H1 (cell line): ENCODE measurements at regions of chr1 and their contacts with region 1.

Region 1: GRCh38 chr1:157580179-157580827 is 17.6 kb downstream of the FCRL4 start:
- DNase-seq: peak in 1 of 2 experiments; percentile 53
- H3K4me3 ChIP-seq: no peak overlapping the region
- H3K27ac ChIP-seq: no peak overlapping the region
- H3K4me1 ChIP-seq: no peaks in the 10 kb centered on the region
- H3K27me3 ChIP-seq: no peaks in the 10 kb centered on the region
- CTCF ChIP-seq: peak in 2 of 3 experiments; percentile 75 to 82; a peak in 3 of 4 replicates
- EP300 ChIP-seq: no peak
- POLR2A ChIP-seq: no peak
- RAD21 ChIP-seq: peak; percentile 71 to 78

Region 2: GRCh38 chr1:157562515-157562914 is 17.8 kb before region 1 on chr1:
- CTCF ChIA-PET with region 1: interaction called, 104 read pairs
- POLR2A ChIA-PET with region 1: no interaction called
- DNase-seq: no peak
- H3K4me3 ChIP-seq: no peak overlapping the region
- H3K27ac ChIP-seq: no peak overlapping the region
- H3K4me1 ChIP-seq: peaks cover 0 to 10% (median 10%) of the 10 kb centered on the region in 4 experiments; a peak in 4 of 7 replicates
- H3K27me3 ChIP-seq: no peaks in the 10 kb centered on the region
- CTCF ChIP-seq: no peak
- EP300 ChIP-seq: no peak
- POLR2A ChIP-seq: no peak
- RAD21 ChIP-seq: no peak

Region 3: DNA sequence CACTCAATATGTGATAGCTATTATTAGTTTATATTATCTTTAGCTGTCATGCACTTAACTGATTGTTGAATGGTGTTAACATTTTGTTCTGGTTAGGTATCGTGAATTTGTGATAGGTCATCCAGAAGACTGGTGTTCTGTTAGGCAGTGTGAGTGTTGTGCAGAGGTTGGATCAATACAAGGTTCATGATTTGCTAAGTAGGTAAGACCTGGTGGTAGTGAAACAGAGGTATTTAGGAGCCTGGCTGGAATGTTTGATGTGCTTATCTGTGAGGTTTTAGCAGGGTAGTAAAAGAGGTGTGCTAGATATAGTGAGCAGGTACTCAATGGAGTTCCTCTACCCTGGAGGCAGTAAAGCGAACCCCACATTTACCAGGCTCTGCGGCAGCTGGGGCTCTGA is 37.9 kb after region 1 on chr1:
- CTCF ChIA-PET with region 1: interaction called, 14 read pairs
- POLR2A ChIA-PET with region 1: no interaction called
- DNase-seq: no peak
- H3K4me3 ChIP-seq: no peak overlapping the region
- H3K27ac ChIP-seq: no peak overlapping the region
- H3K4me1 ChIP-seq: no peaks in the 10 kb centered on the region
- H3K27me3 ChIP-seq: 0 out of 7 replicates have a peak, but pooled peaks cover 0 to 2% (median 0%) of the 10 kb centered on the region in 4 experiments
- CTCF ChIP-seq: no peak
- EP300 ChIP-seq: no peak
- POLR2A ChIP-seq: no peak
- RAD21 ChIP-seq: no peak

Region 4: GRCh38 chr1:157639800-157640199 is 59.5 kb after region 1 on chr1:
- CTCF ChIA-PET with region 1: no interaction called
- POLR2A ChIA-PET with region 1: no interaction called
- DNase-seq: no peak
- H3K4me3 ChIP-seq: no peak overlapping the region; a peak in 1 of 8 replicates
- H3K27ac ChIP-seq: no peak overlapping the region
- H3K4me1 ChIP-seq: peaks cover 2 to 13% (median 7%) of the 10 kb centered on the region in 4 experiments; a peak in 5 of 7 replicates
- H3K27me3 ChIP-seq: no peaks in the 10 kb centered on the region; a peak in 1 of 7 replicates
- CTCF ChIP-seq: no peak
- EP300 ChIP-seq: no peak
- POLR2A ChIP-seq: no peak
- RAD21 ChIP-seq: no peak

Region 5: DNA sequence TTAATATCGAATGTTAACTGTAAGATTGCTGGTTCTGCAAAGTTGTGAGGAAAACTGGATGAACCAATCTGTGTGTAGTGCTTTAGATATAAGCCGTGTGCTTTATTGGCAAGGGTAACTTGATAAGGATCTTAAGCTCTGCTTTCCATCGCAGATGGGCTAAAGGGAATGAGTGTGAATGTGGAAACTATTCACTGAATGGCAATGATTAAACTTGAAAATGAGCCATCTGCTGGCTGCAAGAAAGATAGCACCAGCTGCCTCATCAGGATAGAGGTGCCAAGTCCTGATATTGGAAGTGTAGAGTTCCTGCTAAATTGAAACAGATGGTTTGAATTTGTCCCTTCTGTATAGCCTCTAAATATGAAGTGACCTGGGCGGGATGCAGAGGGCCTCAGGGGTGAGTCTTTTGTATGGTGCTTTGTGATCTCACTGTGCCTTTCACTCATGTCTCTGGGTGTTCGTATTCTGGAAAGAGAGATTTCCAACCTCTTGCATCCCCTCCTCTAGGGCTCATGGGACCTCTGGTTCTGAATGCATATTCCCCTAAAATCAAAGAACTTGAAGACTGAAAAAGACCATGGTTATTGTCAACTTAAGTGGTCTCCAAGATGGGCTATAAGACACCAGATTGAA is 111.1 kb after region 1 on chr1:
- CTCF ChIA-PET with region 1: interaction called, 44 read pairs
- POLR2A ChIA-PET with region 1: no interaction called
- DNase-seq: no peak
- H3K4me3 ChIP-seq: no peak overlapping the region
- H3K27ac ChIP-seq: no peak overlapping the region
- H3K4me1 ChIP-seq: peaks cover 0 to 2% (median 0%) of the 10 kb centered on the region in 4 experiments; a peak in 3 of 7 replicates
- H3K27me3 ChIP-seq: no peaks in the 10 kb centered on the region
- CTCF ChIP-seq: peak in 2 of 3 experiments; percentile 67 to 78; a peak in 3 of 4 replicates
- EP300 ChIP-seq: no peak
- POLR2A ChIP-seq: no peak
- RAD21 ChIP-seq: peak; percentile 62 to 65